Left ventricle myocardium inferior (tissue), 1 donor: ENCODE measurements at regions of chr1 and their contacts with region 1.

Region 1: GRCh38 chr1:221435504-221435904 is 306.4 kb downstream of the DUSP10 start:
- DNase-seq: no peak
- H3K4me3 ChIP-seq: no peak overlapping the region
- H3K27ac ChIP-seq: peak overlapping the region; percentile 5
- H3K4me1 ChIP-seq: peaks cover 23% of the 10 kb centered on the region
- H3K27me3 ChIP-seq: no peaks in the 10 kb centered on the region
- CTCF ChIP-seq: peak; percentile 97

Region 2: GRCh38 chr1:220810179-220810653 is 625.3 kb before region 1 on chr1:
- intact Hi-C with region 1: loop called (anchors 10 kb)
- DNase-seq: peak; percentile 79
- H3K4me3 ChIP-seq: peak overlapping the region; percentile 53
- H3K27ac ChIP-seq: no peak overlapping the region
- H3K4me1 ChIP-seq: peaks cover 16% of the 10 kb centered on the region
- H3K27me3 ChIP-seq: no peaks in the 10 kb centered on the region
- CTCF ChIP-seq: peak; percentile 93

Region 3: DNA sequence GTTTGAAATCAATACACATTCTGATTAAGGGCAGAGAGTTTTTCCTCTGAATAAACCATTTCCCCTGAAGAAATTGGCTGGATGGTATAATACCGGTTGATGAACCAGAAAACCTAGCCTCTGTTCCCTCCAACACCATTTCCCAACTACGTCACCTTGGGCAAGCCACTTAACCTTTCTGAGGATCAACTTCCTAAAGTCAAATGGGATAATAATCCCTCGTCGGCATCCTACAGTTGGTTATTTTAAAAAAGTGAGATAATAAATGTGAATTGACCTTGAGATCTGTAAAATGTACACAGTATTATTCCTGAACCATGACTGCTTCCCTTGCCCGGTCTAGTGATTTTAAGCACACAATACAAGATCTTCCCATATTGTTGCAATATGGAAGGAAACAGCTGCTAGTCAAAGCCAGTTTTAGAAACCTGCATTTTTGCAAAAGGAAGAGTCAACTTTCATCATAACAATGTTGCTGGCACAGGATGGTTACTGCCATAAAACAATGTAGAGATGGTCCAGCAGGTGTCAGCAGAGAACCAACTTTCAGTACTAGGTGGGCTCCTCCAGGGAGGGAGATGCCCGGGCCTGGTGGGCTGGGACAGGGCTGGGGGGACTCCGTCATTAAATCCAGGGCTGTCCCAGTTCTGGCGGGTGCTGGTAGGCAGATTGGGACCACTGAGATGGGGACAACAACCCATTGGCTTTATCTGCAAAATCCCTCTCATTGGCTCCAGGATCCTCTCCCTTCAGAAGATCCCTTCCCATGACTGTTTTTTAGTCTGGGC is 561.4 kb before region 1 on chr1:
- intact Hi-C with region 1: loop called (anchors 2 kb)
- DNase-seq: no peak
- H3K4me3 ChIP-seq: no peak overlapping the region
- H3K27ac ChIP-seq: peak overlapping the region; percentile 21
- H3K4me1 ChIP-seq: peaks cover 53% of the 10 kb centered on the region
- H3K27me3 ChIP-seq: no peaks in the 10 kb centered on the region
- CTCF ChIP-seq: peak; percentile 85

Region 4: DNA sequence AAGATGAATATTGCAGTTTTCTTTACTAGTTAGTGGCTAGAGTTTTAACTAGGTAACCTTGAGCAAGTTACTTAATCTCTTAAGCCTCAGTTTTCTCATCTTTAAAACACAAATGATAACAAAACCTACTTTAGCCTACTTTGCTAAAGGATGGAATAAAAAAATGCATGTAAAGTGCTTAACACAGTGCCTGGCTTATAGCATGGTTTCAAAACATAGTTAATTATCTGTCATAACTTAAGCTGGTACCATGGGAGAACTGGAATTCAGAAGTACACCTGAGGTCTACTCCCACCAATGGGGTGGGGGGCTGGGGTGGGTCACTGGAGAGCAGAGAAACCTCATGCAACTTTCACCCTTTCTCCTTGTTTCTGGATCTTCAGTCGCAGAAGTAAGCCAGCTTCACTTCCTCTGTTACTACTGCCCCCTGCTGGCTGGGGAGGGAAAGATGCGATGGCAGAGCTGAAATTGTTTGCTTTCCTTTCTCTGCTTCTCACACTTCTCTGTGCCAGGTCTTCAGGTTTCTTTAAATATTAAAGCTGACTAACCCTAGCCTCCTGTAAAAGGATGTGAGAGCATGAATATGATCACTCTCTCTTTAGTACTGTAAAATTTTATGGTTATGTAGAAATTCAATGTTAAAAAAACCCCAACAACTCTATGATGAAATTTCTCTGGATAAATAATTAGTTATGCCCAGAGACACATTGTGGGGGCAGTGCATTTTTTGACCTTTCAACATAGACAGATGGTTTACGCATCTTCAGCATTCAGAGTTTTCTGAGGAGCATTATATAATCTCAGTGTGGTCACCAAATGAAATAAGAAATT is 232.1 kb before region 1 on chr1:
- intact Hi-C with region 1: loop called (anchors 10 kb)
- DNase-seq: peak; percentile 76
- H3K4me3 ChIP-seq: peak overlapping the region; percentile 6
- H3K27ac ChIP-seq: peak overlapping the region; percentile 83
- H3K4me1 ChIP-seq: peaks cover 35% of the 10 kb centered on the region
- H3K27me3 ChIP-seq: no peaks in the 10 kb centered on the region
- CTCF ChIP-seq: peak; percentile 92

Region 5: DNA sequence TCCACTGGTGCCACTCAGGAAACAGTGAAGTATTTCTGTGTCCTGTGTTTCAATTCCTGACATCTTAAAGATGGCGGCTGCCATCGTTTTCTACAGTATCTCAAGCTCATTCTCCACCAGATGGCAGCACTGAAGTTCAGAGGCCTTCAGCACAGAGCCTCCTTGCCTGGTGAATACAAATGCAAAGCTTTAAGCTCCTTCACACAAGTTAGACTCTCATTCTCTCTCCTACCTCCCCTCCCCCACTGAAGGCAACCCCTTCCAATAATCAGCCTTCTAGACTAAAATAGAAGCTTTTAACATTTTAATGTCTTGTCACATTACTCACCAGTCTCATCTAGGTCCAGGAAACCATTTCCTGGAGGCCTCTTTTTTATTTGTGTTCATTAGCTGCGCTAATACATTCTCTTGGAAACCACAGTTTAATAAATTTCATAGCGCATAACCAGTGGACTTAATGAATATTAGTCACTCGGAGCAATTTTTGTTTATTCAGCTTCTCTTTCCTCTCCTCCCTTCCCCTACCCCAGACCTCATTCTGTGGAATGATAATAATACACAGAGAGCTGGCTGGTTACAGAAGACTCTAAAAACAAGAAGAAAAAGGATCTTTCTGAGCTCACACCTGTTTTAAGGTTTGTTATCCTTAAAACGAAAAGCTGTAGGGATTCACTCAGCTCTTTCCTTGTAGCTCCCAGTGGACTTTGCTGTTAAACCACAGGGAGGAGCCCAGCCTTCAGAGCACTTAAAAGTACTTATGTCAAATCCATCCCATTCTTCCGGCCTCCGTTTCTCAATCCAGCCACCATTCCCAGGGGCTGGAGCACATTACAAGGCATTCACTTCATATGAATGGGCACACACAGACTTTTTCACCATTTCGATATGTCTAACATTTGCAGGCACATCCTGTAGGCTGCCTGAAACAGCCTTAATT is 171.4 kb before region 1 on chr1:
- intact Hi-C with region 1: loop called (anchors 5 kb)
- DNase-seq: no peak
- H3K4me3 ChIP-seq: no peak overlapping the region
- H3K27ac ChIP-seq: peak overlapping the region; percentile 59
- H3K4me1 ChIP-seq: peaks cover 16% of the 10 kb centered on the region
- H3K27me3 ChIP-seq: no peaks in the 10 kb centered on the region
- CTCF ChIP-seq: peak; percentile 61

Region 6: GRCh38 chr1:221458447-221459156 is 23.1 kb after region 1 on chr1:
- intact Hi-C with region 1: no loop called
- DNase-seq: no peak
- H3K4me3 ChIP-seq: no peak overlapping the region
- H3K27ac ChIP-seq: peak overlapping the region; percentile 24
- H3K4me1 ChIP-seq: peaks cover 7% of the 10 kb centered on the region
- H3K27me3 ChIP-seq: peaks cover 7% of the 10 kb centered on the region
- CTCF ChIP-seq: no peak

Region 7: GRCh38 chr1:221509575-221510355 is 74.3 kb after region 1 on chr1:
- intact Hi-C with region 1: no loop called
- DNase-seq: no peak
- H3K4me3 ChIP-seq: no peak overlapping the region
- H3K27ac ChIP-seq: no peak overlapping the region
- H3K4me1 ChIP-seq: no peaks in the 10 kb centered on the region
- H3K27me3 ChIP-seq: no peaks in the 10 kb centered on the region
- CTCF ChIP-seq: no peak